Dendritic cell treated with granulocyte-macrophage colony-stimulating factor and Interleukin-4, amounts not matched to agents 40 ng/mL and 50 ng/mL, for 4 days (primary cell): ENCODE measurements at regions of chr4 and their contacts with region 1.

Region 1: DNA sequence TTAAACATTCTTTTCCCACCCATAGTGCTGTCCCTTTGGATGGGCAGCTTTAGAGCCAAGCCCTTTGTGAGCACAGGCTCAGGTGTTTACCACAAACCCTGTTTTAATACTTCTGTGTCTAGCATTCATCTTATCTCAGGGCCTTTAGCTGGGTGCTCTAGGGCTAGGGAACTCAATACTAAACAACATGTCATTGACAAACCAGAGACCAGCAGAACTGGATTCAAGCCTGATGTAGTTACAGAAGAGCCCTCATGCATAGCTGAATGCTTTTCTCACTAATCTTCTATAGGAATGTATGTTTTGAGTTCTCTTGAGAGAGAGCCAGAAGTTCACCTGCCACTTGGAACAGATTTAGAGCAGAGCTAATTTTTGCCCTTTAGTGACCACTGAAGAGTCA is 142.6 kb downstream of the DCK start:
- H3K4me3 Mint-ChIP-seq: no peak overlapping the region
- H3K27ac Mint-ChIP-seq: no peak overlapping the region
- H3K4me1 Mint-ChIP-seq: no peaks in the 10 kb centered on the region
- H3K27me3 Mint-ChIP-seq: no peaks in the 10 kb centered on the region

Region 2: GRCh38 chr4:71785959-71786358 is 649.9 kb after region 1 on chr4:
- intact Hi-C with region 1: loop called (anchors 5 kb)
- H3K4me3 Mint-ChIP-seq: no peak overlapping the region
- H3K27ac Mint-ChIP-seq: no peak overlapping the region
- H3K4me1 Mint-ChIP-seq: no peaks in the 10 kb centered on the region
- H3K27me3 Mint-ChIP-seq: no peaks in the 10 kb centered on the region